HEK293 (cell line): ENCODE measurements at regions of chr17 and their contacts with region 1.

Region 1: GRCh38 chr17:28552246-28552999 is at the start of gene UNC119:
- H3K4me3 ChIP-seq: peak within 1 kb of the TSS; percentile 74
- H3K27ac ChIP-seq: peak within 1 kb of the TSS; percentile 83; the same call in 1 of the 2 replicates
- H3K4me1 ChIP-seq: peaks cover 14% of the 10 kb centered on the region
- CTCF ChIP-seq: peak; percentile 20; the same call in 1 of the 2 replicates

Region 2: GRCh38 chr17:28494445-28495188 is 57.8 kb before region 1 on chr17:
- CTCF ChIA-PET with region 1: interaction called, 35 read pairs
- POLR2A ChIA-PET with region 1: interaction called, 3 read pairs
- H3K4me3 ChIP-seq: no peak overlapping the region
- H3K27ac ChIP-seq: no peak overlapping the region
- H3K4me1 ChIP-seq: no peaks in the 10 kb centered on the region
- CTCF ChIP-seq: peak; percentile 86

Region 3: DNA sequence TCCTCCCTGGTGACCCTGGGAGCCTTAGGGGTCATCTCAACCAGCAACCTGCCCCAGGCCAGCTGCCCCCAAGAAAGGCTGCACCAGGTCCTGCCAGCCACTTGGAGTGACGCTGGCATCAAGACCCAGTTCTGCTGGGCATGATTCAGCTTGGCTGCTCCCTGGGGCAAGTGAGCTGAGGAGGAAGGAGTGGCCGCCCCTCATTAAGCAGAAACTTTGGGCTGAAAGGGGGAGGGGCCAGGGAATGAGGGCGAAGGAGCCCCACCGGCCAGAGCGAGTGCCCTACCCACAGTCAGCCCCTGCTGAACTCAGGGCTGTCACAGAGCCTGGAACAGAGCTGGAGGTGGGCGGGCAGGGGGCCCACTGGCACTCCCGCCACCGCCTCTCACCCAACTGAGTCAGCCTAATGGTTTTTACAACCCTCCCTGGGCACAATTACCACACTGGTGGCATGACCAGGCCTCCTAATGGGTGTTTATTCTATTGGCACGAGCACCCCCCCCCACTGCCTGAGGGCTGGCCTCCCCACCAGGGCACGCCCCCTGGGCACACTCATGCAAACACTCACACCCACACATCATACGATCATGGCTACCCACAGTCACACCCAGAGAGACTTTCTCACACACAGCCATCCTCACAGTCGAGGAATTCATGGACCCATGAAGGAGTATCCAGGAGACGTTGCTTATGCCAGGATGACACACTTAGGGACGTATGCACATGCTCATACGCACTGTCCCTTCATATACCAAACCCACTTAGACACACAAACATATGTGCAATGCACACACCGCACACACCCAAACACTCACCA is 19.2 kb before region 1 on chr17:
- CTCF ChIA-PET with region 1: interaction called, 17 read pairs
- POLR2A ChIA-PET with region 1: no interaction called
- H3K4me3 ChIP-seq: no peak overlapping the region
- H3K27ac ChIP-seq: no peak overlapping the region
- H3K4me1 ChIP-seq: no peaks in the 10 kb centered on the region
- CTCF ChIP-seq: no peak

Region 4: DNA sequence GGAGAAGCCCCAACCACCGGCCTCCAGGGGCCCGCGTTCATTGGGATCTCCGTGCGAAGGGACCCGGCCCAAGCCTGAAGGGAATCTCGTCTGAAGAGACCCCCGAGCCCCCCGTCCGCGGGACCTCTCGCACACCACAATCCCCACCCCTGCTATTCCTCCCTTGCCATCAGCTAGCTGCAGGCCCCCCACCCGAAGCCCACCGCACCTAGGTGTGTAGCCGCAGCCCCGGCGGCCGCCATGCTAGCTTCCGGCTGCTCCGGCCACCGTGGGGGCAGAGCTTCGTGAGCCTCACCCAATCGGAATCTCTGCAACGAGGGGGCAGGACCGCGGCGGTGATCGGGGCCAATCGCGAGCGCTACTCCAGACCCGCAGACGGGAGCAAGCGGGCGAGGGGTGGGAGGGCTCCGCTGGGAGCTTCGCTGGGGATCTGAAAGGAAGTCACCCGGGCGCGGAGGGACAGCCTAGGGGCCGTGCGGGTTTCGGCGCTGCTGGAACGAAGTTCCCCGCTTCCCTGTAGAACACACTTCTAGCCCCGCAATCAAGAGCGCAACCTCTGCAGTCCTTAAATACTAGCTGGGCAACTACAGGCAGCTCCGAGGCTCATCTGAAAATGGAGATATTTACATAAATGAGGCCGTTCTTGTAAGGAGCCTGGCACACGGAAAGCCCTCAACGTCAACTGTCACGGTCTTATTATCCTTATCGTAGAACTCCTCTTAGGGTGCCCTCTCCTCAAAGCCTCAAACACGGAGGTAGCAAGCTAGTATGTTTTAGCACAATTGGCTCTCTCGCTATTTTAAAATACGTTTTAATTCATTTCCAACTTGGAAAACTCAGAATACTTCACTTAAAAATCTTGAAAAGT is 19.1 kb after region 1 on chr17 and contains the start of gene PIGS:
- CTCF ChIA-PET with region 1: interaction called, 26 read pairs
- POLR2A ChIA-PET with region 1: interaction called, 68 read pairs
- H3K4me3 ChIP-seq: peak within 1 kb of the TSS; percentile 73
- H3K27ac ChIP-seq: peak within 1 kb of the TSS; percentile 84
- H3K4me1 ChIP-seq: peaks cover 11% of the 10 kb centered on the region
- CTCF ChIP-seq: no peak

Region 5: GRCh38 chr17:28612936-28613872 is 60.8 kb after region 1 on chr17:
- CTCF ChIA-PET with region 1: interaction called, 46 read pairs
- POLR2A ChIA-PET with region 1: no interaction called
- H3K4me3 ChIP-seq: no peak overlapping the region
- H3K27ac ChIP-seq: peak overlapping the region; percentile 13; the same call in 1 of the 2 replicates
- H3K4me1 ChIP-seq: no peaks in the 10 kb centered on the region
- CTCF ChIP-seq: peak; percentile 28; the same call in 1 of the 2 replicates